BJ (cell line): ENCODE measurements at regions of chr19 and their contacts with region 1.

Region 1: GRCh38 chr19:47707135-47707925 is 5.9 kb upstream of the EHD2 start:
- DNase-seq: no peak
- H3K4me3 ChIP-seq: no peak overlapping the region
- H3K27me3 ChIP-seq: no peaks in the 10 kb centered on the region
- CTCF ChIP-seq: peak; percentile 93

Region 2: DNA sequence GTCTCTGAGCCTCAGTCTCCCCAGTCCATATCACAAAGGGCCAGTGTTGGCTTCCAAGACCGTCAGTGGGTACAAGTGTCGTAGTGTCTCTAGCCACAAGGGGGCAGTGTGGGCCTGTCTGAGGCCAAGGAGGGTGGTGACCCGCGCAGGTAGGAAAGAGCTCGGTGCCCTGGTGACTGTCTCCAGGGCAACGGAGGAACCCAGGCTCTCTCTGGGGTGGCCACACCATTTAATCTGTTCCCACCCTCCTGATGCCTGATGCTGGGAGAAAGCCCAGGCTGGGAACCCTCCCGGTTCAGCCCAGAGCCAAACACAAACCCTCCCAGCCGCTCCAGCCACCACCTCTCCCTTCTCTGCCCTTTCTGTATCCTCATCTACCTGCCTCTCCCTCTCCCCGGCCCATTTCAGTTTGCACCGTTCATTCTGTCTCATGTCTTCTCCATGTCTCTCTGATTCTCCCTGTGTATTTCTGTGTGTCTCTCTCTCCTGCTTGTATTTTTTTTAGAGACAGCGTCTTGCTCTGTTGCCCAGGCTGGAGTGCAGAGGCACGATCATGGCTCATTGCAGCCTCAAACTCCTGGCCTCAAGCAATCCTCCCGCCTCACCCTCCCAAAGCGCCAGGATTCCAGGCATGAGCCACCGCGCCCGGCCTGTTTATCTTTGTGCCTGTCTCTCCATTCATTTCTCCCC is 270.5 kb before region 1 on chr19:
- CTCF ChIA-PET with region 1: interaction called, 428 read pairs
- POLR2A ChIA-PET with region 1: no interaction called
- DNase-seq: no peak
- H3K4me3 ChIP-seq: no peak overlapping the region
- H3K27me3 ChIP-seq: peaks cover 2% of the 10 kb centered on the region; the same call in 1 of the 2 replicates
- CTCF ChIP-seq: peak; percentile 90

Region 3: DNA sequence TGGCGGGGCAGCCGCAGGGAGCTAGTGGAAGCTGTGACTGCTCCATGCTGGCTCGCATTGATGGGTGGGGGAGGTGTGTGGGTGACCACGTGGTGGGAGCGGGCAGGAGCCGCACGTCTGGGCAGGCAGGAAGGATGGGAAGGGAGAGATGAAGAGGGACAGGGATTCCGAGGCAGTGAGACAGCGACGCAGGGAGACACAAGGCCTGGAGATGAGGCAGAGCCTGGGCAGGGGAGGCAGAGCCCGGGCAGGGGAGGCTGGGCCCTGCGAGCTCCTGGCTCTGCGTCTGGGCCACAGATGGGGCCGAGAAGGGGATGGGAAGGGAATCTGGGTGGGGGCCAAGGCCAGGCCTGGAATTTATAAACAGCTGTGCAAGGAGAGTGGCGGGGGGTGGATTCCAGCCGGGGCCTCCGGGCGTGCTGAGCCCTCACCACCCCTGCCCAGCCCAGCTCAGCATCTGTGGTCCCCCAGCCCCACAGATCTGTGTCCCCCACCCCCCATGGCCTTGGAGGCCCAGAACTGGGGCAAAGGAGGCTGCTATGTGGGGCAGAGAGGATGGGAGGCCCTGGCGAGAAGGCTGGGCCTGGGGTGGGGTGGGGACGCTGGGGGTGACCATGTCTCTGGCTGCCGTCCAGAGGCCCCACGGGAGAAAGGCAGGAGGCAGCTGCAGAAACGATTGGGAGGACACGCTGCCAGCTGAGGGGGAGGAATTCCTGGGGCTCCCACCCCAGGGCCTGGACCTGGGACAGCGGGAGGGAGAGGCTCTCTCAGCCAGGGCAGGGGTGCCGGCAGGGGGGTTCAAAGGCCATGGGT is 11.9 kb after region 1 on chr19:
- CTCF ChIA-PET with region 1: interaction called, 16 read pairs
- POLR2A ChIA-PET with region 1: interaction called, 4 read pairs
- DNase-seq: peak; percentile 99
- H3K4me3 ChIP-seq: peak overlapping the region; percentile 28
- H3K27me3 ChIP-seq: no peaks in the 10 kb centered on the region
- CTCF ChIP-seq: no peak

Region 4: GRCh38 chr19:47745010-47745901 is 37.9 kb after region 1 on chr19 and contains the start of gene NOP53:
- CTCF ChIA-PET with region 1: interaction called, 160 read pairs
- POLR2A ChIA-PET with region 1: no interaction called
- DNase-seq: peak; percentile 85
- H3K4me3 ChIP-seq: peak within 1 kb of the TSS; percentile 83
- H3K27me3 ChIP-seq: no peaks in the 10 kb centered on the region
- CTCF ChIP-seq: no peak
- polyA plus RNA-seq, gene NOP53: 119 and 135 TPM in 2 replicates

Region 5: GRCh38 chr19:47848823-47849473 is 141.6 kb after region 1 on chr19:
- CTCF ChIA-PET with region 1: no interaction called
- POLR2A ChIA-PET with region 1: no interaction called
- DNase-seq: no peak
- H3K4me3 ChIP-seq: no peak overlapping the region
- H3K27me3 ChIP-seq: peaks cover 12% of the 10 kb centered on the region
- CTCF ChIP-seq: peak; percentile 42

Region 6: GRCh38 chr19:48110350-48110966 is 403.1 kb after region 1 on chr19 and contains the start of gene PLA2G4C:
- CTCF ChIA-PET with region 1: no interaction called
- POLR2A ChIA-PET with region 1: no interaction called
- DNase-seq: peak; percentile 71
- H3K4me3 ChIP-seq: peak within 1 kb of the TSS; percentile 48
- H3K27me3 ChIP-seq: no peaks in the 10 kb centered on the region
- CTCF ChIP-seq: no peak
- polyA plus RNA-seq, gene PLA2G4C: 7.2 and 11.3 TPM in 2 replicates